Activated naive CD4-positive, alpha-beta T cell treated with anti-CD3 and anti-CD28 coated beads for 36 hours (primary cell): ENCODE measurements at regions of chr2 and their contacts with region 1.

Region 1: DNA sequence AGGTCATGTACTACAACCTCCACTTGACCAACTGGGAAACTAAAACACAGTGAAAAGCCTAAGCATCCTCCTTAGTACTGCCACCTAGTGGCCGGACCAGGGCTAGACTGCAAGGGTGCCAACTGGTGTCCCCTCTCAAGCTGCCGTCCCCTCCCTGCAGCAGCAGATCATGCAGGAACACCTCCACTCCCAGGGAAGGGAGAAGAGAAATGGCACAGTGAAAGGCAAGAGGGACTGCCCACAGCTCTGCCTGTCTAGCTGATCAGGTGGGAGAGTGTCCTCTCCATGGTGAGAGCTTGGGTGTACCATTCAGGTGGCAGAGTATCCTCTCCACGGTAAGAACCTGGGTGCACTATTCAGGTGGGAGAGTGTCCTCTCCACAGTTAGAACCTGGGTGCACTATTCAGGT is 78.1 kb downstream of the AAK1 start:
- DNase-seq: peak; percentile 82
- H3K4me3 Mint-ChIP-seq: no peak overlapping the region
- H3K27ac Mint-ChIP-seq: peak overlapping the region; percentile 41
- H3K4me1 Mint-ChIP-seq: peaks cover 87% of the 10 kb centered on the region
- H3K27me3 Mint-ChIP-seq: no peaks in the 10 kb centered on the region

Region 2: DNA sequence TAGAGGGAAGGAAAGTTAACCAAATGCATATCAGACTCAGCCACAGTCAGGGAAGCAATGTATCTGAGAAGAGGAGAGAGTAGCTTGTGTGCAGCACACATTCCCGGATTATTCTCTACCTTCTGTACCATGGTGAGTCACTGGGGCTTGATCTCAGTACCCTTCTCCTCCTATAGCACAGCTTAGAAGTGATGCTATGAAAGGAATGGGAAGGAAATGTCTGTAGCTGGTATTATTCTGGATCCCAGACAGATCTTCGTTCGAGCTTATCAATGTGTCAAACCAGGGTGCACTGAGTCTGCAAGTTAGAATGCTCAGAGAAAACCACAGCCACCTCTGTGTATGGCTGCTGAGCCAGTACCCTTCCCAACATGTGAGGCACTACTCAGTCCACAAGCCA is 40.2 kb before region 1 on chr2:
- CTCF ChIA-PET with region 1: interaction called, 16 read pairs
- intact Hi-C with region 1: no loop called
- DNase-seq: no peak
- H3K4me3 Mint-ChIP-seq: no peak overlapping the region
- H3K27ac Mint-ChIP-seq: no peak overlapping the region
- H3K4me1 Mint-ChIP-seq: no peaks in the 10 kb centered on the region
- H3K27me3 Mint-ChIP-seq: no peaks in the 10 kb centered on the region

Region 3: GRCh38 chr2:69601179-69601612 is 35.8 kb after region 1 on chr2:
- CTCF ChIA-PET with region 1: interaction called, 14 read pairs
- intact Hi-C with region 1: no loop called
- DNase-seq: peak; percentile 24
- H3K4me3 Mint-ChIP-seq: no peak overlapping the region
- H3K27ac Mint-ChIP-seq: peak overlapping the region; percentile 79
- H3K4me1 Mint-ChIP-seq: peaks cover 92% of the 10 kb centered on the region
- H3K27me3 Mint-ChIP-seq: no peaks in the 10 kb centered on the region

Region 4: DNA sequence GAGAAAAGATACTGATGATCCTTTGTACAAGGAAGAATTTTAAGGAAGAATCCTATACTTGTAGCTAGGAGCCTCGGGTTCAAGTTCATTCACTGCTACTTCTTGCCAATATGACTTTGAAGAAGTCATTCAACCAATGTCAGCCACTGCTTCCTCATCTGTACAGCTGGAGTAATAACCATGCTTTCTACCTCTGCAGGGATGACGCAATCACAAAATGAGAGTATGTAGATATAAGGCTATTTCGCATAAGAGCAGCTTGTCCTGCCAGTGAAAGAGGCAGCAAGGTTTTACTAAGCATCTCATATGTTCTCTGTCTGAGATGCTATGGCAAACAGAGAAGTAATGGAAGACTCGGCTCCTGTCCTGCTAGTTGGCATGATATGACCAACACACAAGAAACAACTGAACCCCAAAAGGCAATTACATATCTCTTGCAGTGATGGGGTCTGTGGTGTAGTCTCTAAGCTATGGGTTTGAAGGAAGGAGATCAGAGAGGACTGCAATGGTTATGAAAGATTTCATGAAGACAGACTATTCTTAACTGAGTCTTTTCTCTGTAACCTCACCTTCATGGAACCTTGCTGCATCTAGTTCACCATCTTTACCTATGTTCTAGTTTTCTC is 68.9 kb after region 1 on chr2:
- CTCF ChIA-PET with region 1: interaction called, 27 read pairs
- intact Hi-C with region 1: no loop called
- DNase-seq: no peak
- H3K4me3 Mint-ChIP-seq: no peak overlapping the region
- H3K27ac Mint-ChIP-seq: peak overlapping the region; percentile 59
- H3K4me1 Mint-ChIP-seq: peaks cover 68% of the 10 kb centered on the region
- H3K27me3 Mint-ChIP-seq: no peaks in the 10 kb centered on the region

Region 5: DNA sequence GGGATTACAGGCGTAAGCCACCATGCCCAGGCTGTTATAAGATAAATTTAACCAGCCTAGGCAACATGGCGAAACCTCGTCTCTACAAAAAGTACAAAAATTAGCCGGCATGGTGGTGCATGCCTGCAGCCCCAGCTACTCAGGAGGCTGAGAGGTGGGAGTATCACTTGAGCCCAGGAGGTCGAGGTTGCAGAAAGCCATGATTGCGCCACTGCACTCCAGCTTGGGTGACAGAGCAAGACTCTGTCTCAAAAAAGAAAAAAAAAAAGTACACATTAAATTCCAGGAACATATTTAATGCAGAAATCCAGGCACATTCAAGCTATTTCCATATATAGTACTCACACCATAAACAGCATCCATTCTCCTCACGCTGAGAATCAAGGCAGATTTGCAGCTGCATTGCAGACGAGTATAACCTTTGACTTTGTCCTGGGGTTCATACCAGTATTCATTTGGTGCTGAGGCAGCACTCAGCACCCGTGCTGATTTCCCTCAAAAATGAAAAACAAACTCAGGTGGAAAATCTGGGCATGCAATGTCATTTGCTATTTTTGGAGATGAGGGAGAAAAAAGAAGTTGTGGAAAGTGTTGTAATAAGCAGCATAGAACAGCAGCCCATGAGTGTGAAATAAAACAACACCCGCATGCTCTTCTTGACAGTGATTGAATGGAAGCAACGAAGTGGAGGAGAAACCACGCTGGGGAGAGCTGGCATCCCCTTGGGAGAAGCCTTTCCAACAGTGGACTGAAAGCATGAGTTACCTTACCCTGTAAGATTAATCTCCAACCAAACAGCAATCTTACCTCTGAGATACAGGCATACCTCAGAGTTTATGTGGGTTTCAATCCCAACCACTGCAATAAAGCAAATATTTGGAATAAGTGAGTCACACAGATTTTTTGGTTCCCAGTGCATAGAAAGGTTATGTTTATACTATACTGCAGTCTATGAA is 129.7 kb after region 1 on chr2:
- CTCF ChIA-PET with region 1: interaction called, 12 read pairs
- intact Hi-C with region 1: no loop called
- DNase-seq: no peak
- H3K4me3 Mint-ChIP-seq: peak overlapping the region; percentile 22
- H3K27ac Mint-ChIP-seq: peak overlapping the region; percentile 18
- H3K4me1 Mint-ChIP-seq: peaks cover 83% of the 10 kb centered on the region
- H3K27me3 Mint-ChIP-seq: no peaks in the 10 kb centered on the region